Caco-2 (cell line): ENCODE measurements at regions of chr2 and their contacts with region 1.

Region 1: GRCh38 chr2:120312861-120313694 is 32.9 kb upstream of the INHBB start:
- DNase-seq: peak; percentile 79 to 84
- H3K4me3 ChIP-seq: peak overlapping the region; percentile 18
- H3K4me3 Mint-ChIP-seq: peak overlapping the region; percentile 73
- H3K27ac Mint-ChIP-seq: no peak overlapping the region
- H3K4me1 ChIP-seq: no peaks in the 10 kb centered on the region
- H3K4me1 Mint-ChIP-seq: no peaks in the 10 kb centered on the region
- H3K27me3 ChIP-seq: no peaks in the 10 kb centered on the region
- H3K27me3 Mint-ChIP-seq: no peaks in the 10 kb centered on the region
- CTCF ChIP-seq: peak; percentile 92 to 94

Region 2: GRCh38 chr2:120174963-120175581 is 138.0 kb before region 1 on chr2:
- CTCF ChIA-PET with region 1: interaction called, 18 read pairs
- POLR2A ChIA-PET with region 1: no interaction called
- intact Hi-C with region 1: loop called (anchors 2 kb)
- DNase-seq: peak in 1 of 2 experiments; percentile 61
- H3K4me3 ChIP-seq: no peak overlapping the region
- H3K4me3 Mint-ChIP-seq: no peak overlapping the region
- H3K27ac Mint-ChIP-seq: no peak overlapping the region
- H3K4me1 ChIP-seq: no peaks in the 10 kb centered on the region
- H3K4me1 Mint-ChIP-seq: no peaks in the 10 kb centered on the region
- H3K27me3 ChIP-seq: no peaks in the 10 kb centered on the region
- H3K27me3 Mint-ChIP-seq: no peaks in the 10 kb centered on the region
- CTCF ChIP-seq: peak; percentile 73 to 77

Region 3: GRCh38 chr2:120223034-120223912 is 89.8 kb before region 1 on chr2 and contains the start of gene TMEM185B:
- CTCF ChIA-PET with region 1: interaction called, 19 read pairs
- POLR2A ChIA-PET with region 1: interaction called, 9 read pairs
- intact Hi-C with region 1: loop called (anchors 1 kb)
- DNase-seq: peak; percentile 96 to 98
- H3K4me3 ChIP-seq: peak within 1 kb of the TSS; percentile 76
- H3K4me3 Mint-ChIP-seq: peak within 1 kb of the TSS; percentile 97
- H3K27ac Mint-ChIP-seq: peak within 1 kb of the TSS; percentile 96
- H3K4me1 ChIP-seq: peaks cover 23% of the 10 kb centered on the region
- H3K4me1 Mint-ChIP-seq: peaks cover 17% of the 10 kb centered on the region
- H3K27me3 ChIP-seq: no peaks in the 10 kb centered on the region
- H3K27me3 Mint-ChIP-seq: no peaks in the 10 kb centered on the region
- CTCF ChIP-seq: peak; percentile 54 to 77
- total RNA-seq, gene TMEM185B: 67.3 and 69.9 TPM in 2 replicates

Region 4: DNA sequence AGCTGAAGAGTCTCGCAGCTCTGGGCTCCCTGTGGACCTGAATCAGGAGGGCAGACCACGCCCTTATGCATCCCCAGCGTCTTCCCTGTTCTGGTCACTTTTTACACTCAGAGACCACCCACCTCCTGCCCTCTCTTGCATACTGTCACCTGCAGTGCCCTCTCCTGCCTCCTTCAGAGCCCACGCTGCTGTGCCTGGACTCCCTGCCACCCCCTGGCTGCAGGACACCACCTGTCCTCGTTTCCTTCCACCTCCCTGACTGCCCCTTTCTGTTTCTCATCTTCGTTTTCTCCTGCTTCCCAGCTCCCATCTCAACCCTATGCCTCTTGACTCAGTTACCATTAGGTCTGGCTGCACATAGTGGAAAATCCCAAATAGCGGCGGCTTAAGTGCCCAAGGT is 23.7 kb after region 1 on chr2:
- CTCF ChIA-PET with region 1: interaction called, 20 read pairs
- POLR2A ChIA-PET with region 1: no interaction called
- intact Hi-C with region 1: no loop called
- DNase-seq: no peak
- H3K4me3 ChIP-seq: no peak overlapping the region
- H3K4me3 Mint-ChIP-seq: no peak overlapping the region
- H3K27ac Mint-ChIP-seq: no peak overlapping the region
- H3K4me1 ChIP-seq: no peaks in the 10 kb centered on the region
- H3K4me1 Mint-ChIP-seq: peaks cover 5% of the 10 kb centered on the region
- H3K27me3 ChIP-seq: no peaks in the 10 kb centered on the region
- H3K27me3 Mint-ChIP-seq: peaks cover 3% of the 10 kb centered on the region
- CTCF ChIP-seq: peak in 1 of 2 experiments; percentile 8

Region 5: GRCh38 chr2:120353591-120353898 is 40.5 kb after region 1 on chr2:
- CTCF ChIA-PET with region 1: no interaction called
- POLR2A ChIA-PET with region 1: no interaction called
- intact Hi-C with region 1: no loop called
- DNase-seq: no peak
- H3K4me3 ChIP-seq: no peak overlapping the region
- H3K4me3 Mint-ChIP-seq: no peak overlapping the region
- H3K27ac Mint-ChIP-seq: no peak overlapping the region
- H3K4me1 ChIP-seq: peaks cover 5% of the 10 kb centered on the region; the same call in 1 of the 2 replicates
- H3K4me1 Mint-ChIP-seq: peaks cover 7% of the 10 kb centered on the region
- H3K27me3 ChIP-seq: no peaks in the 10 kb centered on the region
- H3K27me3 Mint-ChIP-seq: no peaks in the 10 kb centered on the region
- CTCF ChIP-seq: no peak

Region 6: DNA sequence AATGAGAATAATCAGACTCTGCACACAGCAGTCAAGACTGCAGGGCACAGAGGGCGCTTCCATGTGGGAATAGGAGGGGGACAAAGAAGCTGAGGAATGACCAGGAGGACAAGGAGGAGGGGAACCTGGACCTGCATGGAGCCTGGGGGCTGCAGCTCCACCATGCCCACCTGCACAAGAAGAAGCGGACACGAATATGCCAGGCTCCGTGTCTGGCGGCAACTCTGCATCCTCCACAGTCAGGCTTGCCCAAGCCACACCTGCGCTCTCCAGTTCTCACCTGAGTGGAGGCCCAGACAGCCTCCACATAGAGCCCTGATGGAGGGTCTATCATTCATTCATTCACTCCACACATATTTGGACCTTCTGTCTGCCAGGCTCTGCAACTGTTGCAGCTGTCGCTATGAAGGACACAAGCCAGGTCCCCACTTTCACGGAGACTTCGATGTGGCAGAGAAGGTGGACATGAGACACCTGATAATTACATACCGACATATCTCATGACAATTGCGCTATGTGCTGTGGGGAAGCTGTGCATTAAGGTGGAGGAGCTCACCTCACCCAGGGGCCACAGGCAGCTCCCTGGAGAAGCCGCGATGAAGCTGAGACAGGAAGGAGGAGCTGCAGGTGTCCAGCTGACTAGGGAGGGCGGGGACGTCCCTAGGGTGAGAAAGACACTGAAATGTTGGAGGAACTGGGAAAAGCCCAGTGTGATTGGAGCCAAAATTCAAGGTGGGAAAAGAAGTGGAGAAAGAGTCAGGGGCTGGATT is 192.0 kb after region 1 on chr2:
- CTCF ChIA-PET with region 1: no interaction called
- POLR2A ChIA-PET with region 1: no interaction called
- intact Hi-C with region 1: no loop called
- DNase-seq: no peak
- H3K4me3 ChIP-seq: no peak overlapping the region
- H3K4me3 Mint-ChIP-seq: no peak overlapping the region
- H3K27ac Mint-ChIP-seq: no peak overlapping the region
- H3K4me1 ChIP-seq: no peaks in the 10 kb centered on the region
- H3K4me1 Mint-ChIP-seq: no peaks in the 10 kb centered on the region
- H3K27me3 ChIP-seq: no peaks in the 10 kb centered on the region
- H3K27me3 Mint-ChIP-seq: no peaks in the 10 kb centered on the region
- CTCF ChIP-seq: no peak

Region 7: GRCh38 chr2:120596990-120597594 is 284.0 kb after region 1 on chr2:
- CTCF ChIA-PET with region 1: no interaction called
- POLR2A ChIA-PET with region 1: no interaction called
- intact Hi-C with region 1: no loop called
- DNase-seq: no peak
- H3K4me3 ChIP-seq: no peak overlapping the region
- H3K4me3 Mint-ChIP-seq: no peak overlapping the region
- H3K27ac Mint-ChIP-seq: no peak overlapping the region
- H3K4me1 ChIP-seq: peaks cover 10% of the 10 kb centered on the region; the same call in 1 of the 2 replicates
- H3K4me1 Mint-ChIP-seq: peaks cover 13% of the 10 kb centered on the region
- H3K27me3 ChIP-seq: no peaks in the 10 kb centered on the region
- H3K27me3 Mint-ChIP-seq: no peaks in the 10 kb centered on the region
- CTCF ChIP-seq: no peak